Common myeloid progenitor, CD34-positive (primary cell): ENCODE measurements at regions of chr6 and their contacts with region 1.

Region 1: GRCh38 chr6:31541658-31542521 is at the start of gene DDX39B:
- DNase-seq: peak; percentile 98 to 99 (median 99)
- H3K4me3 ChIP-seq: peak within 1 kb of the TSS; percentile 66 to 97 (median 91)
- H3K27ac ChIP-seq: peak within 1 kb of the TSS; percentile 99 to 100
- H3K4me1 ChIP-seq: peaks cover 17 to 47% (median 40%) of the 10 kb centered on the region in 4 experiments
- H3K27me3 ChIP-seq: no peaks in the 10 kb centered on the region

Region 2: GRCh38 chr6:31493875-31494694 is 47.8 kb before region 1 on chr6:
- CTCF ChIA-PET with region 1: interaction called, 17 read pairs
- POLR2A ChIA-PET with region 1: interaction called, 7 read pairs
- DNase-seq: peak; percentile 63 to 73 (median 71)
- H3K4me3 ChIP-seq: peak overlapping the region; percentile 82 to 92 (median 89)
- H3K27ac ChIP-seq: peak overlapping the region in 1 of 2 experiments; percentile 81
- H3K4me1 ChIP-seq: peaks cover 9 to 43% (median 33%) of the 10 kb centered on the region in 4 experiments
- H3K27me3 ChIP-seq: no peaks in the 10 kb centered on the region

Region 3: DNA sequence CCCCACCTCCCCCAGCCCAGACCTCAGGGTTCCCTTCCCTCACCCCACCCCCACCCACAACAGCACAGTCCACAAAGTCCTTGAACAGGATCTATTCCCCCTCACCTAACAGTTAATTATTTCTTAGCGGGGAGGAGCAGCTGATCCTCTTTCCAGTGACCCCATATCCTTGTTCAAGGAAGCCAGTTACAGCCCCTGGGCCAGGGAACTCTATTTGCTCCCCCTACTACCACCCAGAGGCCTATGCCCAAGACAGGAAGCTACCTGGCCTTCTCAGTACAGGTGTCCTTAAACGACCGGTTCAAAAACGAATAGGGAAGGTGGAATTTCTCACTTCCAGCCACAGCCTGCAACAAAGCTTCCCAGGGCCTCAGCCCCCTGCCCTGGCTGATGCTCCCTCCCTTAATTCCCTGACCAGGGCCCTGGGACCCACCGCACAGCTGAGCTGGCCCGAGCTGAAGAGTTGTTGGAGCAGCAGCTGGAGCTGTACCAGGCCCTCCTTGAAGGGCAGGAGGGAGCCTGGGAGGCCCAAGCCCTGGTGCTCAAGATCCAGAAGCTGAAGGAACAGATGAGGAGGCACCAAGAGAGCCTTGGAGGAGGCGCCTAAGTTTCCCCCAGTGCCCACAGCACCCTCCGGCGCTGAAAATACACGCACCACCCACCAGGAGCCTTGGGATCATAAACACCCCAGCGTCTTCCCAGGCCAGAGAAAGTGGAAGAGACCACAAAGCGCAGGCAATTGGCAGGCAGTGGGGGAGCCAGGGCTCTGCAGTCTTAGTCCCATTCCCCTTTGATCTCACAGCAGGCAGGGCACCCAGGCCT is 12.3 kb before region 1 on chr6:
- CTCF ChIA-PET with region 1: interaction called, 7 read pairs
- POLR2A ChIA-PET with region 1: interaction called, 12 read pairs
- DNase-seq: no peak
- H3K4me3 ChIP-seq: no peak overlapping the region
- H3K27ac ChIP-seq: no peak overlapping the region
- H3K4me1 ChIP-seq: peaks cover 0 to 4% (median 0%) of the 10 kb centered on the region in 4 experiments
- H3K27me3 ChIP-seq: no peaks in the 10 kb centered on the region

Region 4: DNA sequence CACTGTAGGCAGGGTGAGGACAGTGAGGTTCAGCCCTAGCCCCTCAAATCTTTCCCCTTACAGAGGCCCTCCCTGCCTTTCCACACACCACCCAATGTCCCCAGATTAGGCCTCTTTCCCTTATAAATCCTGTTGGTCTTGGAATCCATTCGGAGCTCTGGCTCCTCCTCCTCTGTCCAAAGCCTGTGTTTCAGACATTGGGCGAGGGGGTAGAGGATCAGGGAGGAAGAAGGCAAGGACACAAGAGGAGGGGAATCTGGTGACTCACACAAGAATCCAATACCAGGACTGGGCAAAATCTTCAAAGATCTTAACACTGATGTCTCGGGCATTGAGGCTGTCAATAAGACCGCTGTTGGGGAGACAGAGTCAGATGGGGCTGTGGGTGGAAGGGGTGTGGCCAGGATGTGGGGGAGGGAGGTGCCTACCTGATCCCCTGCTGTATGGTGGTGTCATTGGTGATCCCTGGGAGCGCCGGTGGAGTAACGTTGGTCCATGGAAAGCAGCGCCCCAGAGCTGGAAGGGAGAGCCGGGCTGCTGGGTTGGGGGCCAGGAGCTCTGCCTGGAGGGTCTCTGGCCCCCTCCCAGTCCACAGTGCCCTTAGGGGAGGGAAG is 329.3 kb after region 1 on chr6:
- CTCF ChIA-PET with region 1: no interaction called
- POLR2A ChIA-PET with region 1: no interaction called
- DNase-seq: no peak
- H3K4me3 ChIP-seq: no peak overlapping the region
- H3K27ac ChIP-seq: no peak overlapping the region
- H3K4me1 ChIP-seq: peaks cover 0 to 2% (median 0%) of the 10 kb centered on the region in 4 experiments
- H3K27me3 ChIP-seq: peaks cover 0 to 3% (median 0%) of the 10 kb centered on the region in 5 experiments